ENCODE measurements at regions of chr7 and their contacts with region 1.

Region 1: DNA sequence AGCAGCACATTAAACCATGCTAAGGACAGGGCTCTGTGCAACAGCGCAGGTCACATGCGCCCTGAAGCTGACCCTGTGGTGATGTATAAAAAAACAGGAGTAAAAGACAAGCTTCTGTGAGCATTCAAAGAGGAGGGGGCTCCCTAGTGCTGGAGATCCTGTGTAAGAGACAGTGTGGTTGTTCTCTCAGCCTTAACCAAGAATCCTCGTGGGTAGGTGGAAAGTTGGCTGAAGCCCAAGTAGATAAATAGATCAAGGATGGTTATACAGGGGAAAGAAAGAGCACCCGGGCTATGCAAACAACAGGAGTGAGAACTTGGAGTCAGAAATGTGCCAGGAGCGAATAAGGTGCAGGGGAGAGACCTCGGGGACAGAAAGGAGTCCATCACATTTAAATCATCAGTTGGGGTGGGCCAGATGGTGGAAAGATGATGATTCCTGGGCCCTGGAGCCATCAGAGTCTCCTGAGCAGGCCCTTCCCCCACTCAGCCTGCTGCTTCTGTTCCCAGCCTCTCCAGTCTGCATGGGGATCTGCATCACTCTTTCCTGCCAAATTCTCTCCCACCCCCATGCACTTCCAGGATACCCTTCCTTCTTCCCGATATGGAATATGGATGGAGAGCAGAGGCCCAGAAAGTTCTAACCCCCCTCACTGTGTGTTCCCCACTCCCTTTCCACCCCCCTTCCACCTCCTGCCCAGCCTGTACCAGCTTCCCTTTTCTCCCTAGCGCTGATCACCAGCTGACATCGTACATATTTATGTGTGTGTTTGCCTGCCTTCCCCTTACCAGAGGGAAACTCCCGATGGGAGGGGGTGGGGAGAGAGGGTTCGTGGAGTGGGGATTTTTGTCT is 78.1 kb upstream of the PRR15 start:
- DNase-seq: no peak
- H3K4me3 ChIP-seq: no peak overlapping the region
- H3K27ac ChIP-seq: no peak overlapping the region
- H3K4me1 ChIP-seq: no peaks in the 10 kb centered on the region
- CTCF ChIP-seq: no peak

Region 2: GRCh38 chr7:29416276-29416937 is 69.2 kb before region 1 on chr7:
- CTCF ChIA-PET with region 1: no interaction called
- POLR2A ChIA-PET with region 1: no interaction called
- intact Hi-C with region 1: no loop called
- DNase-seq: no peak
- H3K4me3 ChIP-seq: no peak overlapping the region
- H3K27ac ChIP-seq: no peak overlapping the region
- H3K4me1 ChIP-seq: no peaks in the 10 kb centered on the region
- CTCF ChIP-seq: no peak

Region 3: DNA sequence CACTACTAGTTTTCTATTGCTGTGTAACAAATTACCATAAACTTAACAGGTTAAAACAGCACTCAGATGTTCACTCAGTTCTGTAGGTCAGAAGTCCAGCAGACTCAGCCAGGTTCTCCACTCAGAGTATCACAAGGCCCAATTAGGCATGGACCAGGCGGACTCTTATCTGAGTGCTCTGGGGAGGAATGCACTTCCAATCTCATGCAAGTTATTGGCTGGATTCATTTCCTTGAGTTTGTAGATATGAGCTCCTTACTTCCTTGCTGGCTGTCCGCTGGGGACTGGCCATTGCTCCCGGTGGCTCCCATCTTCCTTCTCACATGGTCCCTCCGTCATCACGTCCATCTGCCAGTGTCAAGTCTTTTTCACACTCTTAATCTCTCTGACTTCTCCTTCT is 59.0 kb before region 1 on chr7:
- CTCF ChIA-PET with region 1: interaction called, 14 read pairs
- POLR2A ChIA-PET with region 1: no interaction called
- intact Hi-C with region 1: no loop called
- DNase-seq: no peak
- H3K4me3 ChIP-seq: no peak overlapping the region
- H3K27ac ChIP-seq: no peak overlapping the region
- H3K4me1 ChIP-seq: no peaks in the 10 kb centered on the region
- CTCF ChIP-seq: no peak

Region 4: DNA sequence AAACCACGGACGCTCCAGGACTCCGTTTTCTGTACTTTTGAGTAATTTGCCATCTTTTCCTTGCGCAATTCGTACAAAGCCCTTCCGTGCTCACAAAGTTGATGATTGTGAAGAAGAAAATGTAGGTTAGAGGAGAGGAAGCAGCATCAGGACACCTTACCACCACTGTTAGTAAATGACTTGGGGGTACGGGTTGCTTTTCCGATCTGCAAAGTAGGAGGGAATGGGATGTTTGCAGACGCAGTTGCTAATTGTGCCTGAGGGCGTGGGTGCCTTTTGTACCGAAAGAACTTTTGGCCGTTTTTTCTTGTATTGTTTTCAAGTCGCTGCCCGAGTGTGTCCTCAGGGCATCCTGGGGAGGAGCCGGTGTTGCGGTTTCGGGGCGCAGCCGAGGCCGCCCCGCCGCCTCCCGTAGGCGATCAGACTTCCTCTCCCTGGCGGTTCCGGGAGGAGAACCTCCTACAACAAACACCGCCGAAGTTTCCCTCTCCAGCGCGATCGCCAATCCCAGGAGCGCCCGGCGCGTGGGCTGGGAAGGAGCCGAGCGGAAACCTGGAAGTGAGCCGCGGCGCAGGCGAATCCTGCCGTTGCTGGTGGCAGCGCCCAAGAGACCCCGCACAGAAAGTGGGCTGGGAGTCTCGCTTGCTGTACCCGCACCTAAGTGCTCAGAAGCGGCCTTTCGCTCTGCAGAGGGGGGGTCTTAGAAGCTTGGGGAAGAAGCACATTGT is 79.1 kb after region 1 on chr7:
- CTCF ChIA-PET with region 1: no interaction called
- POLR2A ChIA-PET with region 1: no interaction called
- intact Hi-C with region 1: no loop called
- DNase-seq: no peak
- H3K4me3 ChIP-seq: no peak overlapping the region
- H3K27ac ChIP-seq: no peak overlapping the region
- H3K4me1 ChIP-seq: no peaks in the 10 kb centered on the region
- CTCF ChIP-seq: no peak

Region 5: DNA sequence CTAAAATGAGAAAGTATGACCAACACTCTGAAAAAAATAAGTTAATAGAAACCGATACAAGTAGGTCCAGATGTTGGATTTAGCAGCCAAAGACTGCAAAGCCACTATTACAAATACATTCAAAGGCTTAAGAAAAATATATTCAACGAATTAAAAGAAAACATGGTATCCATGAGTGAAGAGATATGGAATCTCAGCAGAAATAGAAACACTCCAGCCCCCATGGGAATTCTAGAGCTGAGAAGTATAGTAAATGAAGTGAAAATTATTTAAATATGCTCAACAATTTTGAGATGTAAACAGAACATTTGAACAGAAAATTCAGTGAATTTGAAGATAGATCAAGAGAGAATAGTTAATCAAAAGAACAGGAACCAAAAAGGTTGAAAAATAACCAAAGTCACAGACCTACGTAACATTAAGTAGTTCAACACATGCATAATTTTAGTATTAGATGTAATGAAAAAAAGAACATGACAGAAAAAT is 248.7 kb after region 1 on chr7:
- CTCF ChIA-PET with region 1: no interaction called
- POLR2A ChIA-PET with region 1: no interaction called
- intact Hi-C with region 1: no loop called
- DNase-seq: no peak
- H3K4me3 ChIP-seq: no peak overlapping the region
- H3K27ac ChIP-seq: no peak overlapping the region
- H3K4me1 ChIP-seq: no peaks in the 10 kb centered on the region
- CTCF ChIP-seq: no peak